K562 (cell line): ENCODE measurements at regions of chr6 and their contacts with region 1.

Region 1: DNA sequence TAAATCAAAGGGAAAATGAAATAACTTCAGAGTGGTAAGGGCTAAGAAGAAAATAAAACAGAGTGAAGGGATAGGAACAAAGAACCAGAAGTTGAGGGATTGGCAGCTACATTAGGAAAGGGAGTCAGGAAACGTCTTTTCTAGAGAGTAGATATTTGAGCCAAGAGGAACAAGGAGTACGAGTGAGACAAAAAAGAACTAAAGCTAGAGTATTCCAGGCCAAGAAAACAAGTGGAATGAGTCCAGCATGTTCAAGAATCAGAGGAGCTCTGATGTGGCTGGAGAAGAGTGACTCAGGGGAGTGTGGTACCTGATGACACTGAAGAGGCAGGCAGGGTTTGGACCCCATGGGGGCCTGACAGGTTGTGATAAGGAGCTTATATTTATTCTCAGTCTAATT is 66.3 kb downstream of the CEP162 start:
- DNase-seq: peak in 1 of 4 experiments; percentile 12
- ATAC-seq: no peak
- H3K4me3 ChIP-seq: no peak overlapping the region
- H3K27ac ChIP-seq: no peak overlapping the region
- H3K4me1 ChIP-seq: no peaks in the 10 kb centered on the region
- H3K27me3 ChIP-seq: no peaks in the 10 kb centered on the region
- CTCF ChIP-seq: no peak
- EP300 ChIP-seq: no peak
- POLR2A ChIP-seq: no peak
- RAD21 ChIP-seq: no peak

Region 2: GRCh38 chr6:83853178-83854000 is 307.8 kb before region 1 on chr6 and contains the start of gene RIPPLY2:
- CTCF ChIA-PET with region 1: no interaction called
- POLR2A ChIA-PET with region 1: no interaction called
- in situ Hi-C with region 1: no loop called
- intact Hi-C with region 1: no loop called
- DNase-seq: no peak
- ATAC-seq: no peak; the same call in 2 of the 3 replicates
- H3K4me3 ChIP-seq: no peak within 1 kb of the TSS
- H3K27ac ChIP-seq: no peak within 1 kb of the TSS
- H3K4me1 ChIP-seq: peaks cover 0 to 12% of the 10 kb centered on the region in 2 experiments; a peak in 1 of 5 replicates
- H3K27me3 ChIP-seq: peaks cover 16 to 25% of the 10 kb centered on the region in 2 experiments
- CTCF ChIP-seq: no peak
- EP300 ChIP-seq: no peak
- POLR2A ChIP-seq: no peak
- RAD21 ChIP-seq: no peak
- polyA plus RNA-seq, gene RIPPLY2: not detected

Region 3: GRCh38 chr6:83948851-83949250 is 212.3 kb before region 1 on chr6:
- CTCF ChIA-PET with region 1: no interaction called
- POLR2A ChIA-PET with region 1: no interaction called
- in situ Hi-C with region 1: no loop called
- intact Hi-C with region 1: no loop called
- DNase-seq: peak in 2 of 4 experiments; percentile 9 to 17
- ATAC-seq: peak; percentile 70
- H3K4me3 ChIP-seq: no peak overlapping the region
- H3K27ac ChIP-seq: no peak overlapping the region
- H3K4me1 ChIP-seq: peaks cover 0 to 3% of the 10 kb centered on the region in 2 experiments; a peak in 1 of 5 replicates
- H3K27me3 ChIP-seq: no peaks in the 10 kb centered on the region
- CTCF ChIP-seq: no peak
- EP300 ChIP-seq: no peak
- POLR2A ChIP-seq: no peak
- RAD21 ChIP-seq: no peak

Region 4: GRCh38 chr6:84119253-84119652 is 41.9 kb before region 1 on chr6:
- CTCF ChIA-PET with region 1: no interaction called
- POLR2A ChIA-PET with region 1: no interaction called
- in situ Hi-C with region 1: no loop called
- intact Hi-C with region 1: no loop called
- DNase-seq: peak in 1 of 4 experiments; percentile 24
- ATAC-seq: peak; percentile 69; the same call in 2 of the 3 replicates
- H3K4me3 ChIP-seq: no peak overlapping the region
- H3K27ac ChIP-seq: no peak overlapping the region
- H3K4me1 ChIP-seq: peaks cover 0 to 4% of the 10 kb centered on the region in 2 experiments; a peak in 2 of 5 replicates
- H3K27me3 ChIP-seq: no peaks in the 10 kb centered on the region
- CTCF ChIP-seq: no peak; a peak in 1 of 6 replicates
- EP300 ChIP-seq: no peak
- POLR2A ChIP-seq: no peak
- RAD21 ChIP-seq: no peak

Region 5: DNA sequence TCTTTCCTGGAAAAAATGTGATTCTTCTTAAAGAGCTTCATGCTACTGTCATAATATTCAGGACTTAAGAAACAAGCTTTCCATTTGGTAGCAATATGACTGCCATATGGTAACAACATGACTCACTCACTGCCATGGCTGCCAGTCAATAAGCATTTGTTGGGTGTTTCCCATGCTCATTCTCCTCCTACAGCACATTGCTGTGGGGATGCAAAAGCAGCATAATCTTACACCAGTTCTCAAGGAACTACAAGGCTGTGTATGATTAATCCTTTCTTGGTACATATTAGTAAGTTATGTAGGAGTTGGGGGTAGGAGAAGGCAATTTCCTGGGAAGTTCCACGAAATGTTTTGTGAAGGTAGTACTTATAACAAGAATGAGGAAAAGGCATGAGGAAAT is 10.5 kb before region 1 on chr6:
- CTCF ChIA-PET with region 1: no interaction called
- POLR2A ChIA-PET with region 1: interaction called, 10 read pairs
- in situ Hi-C with region 1: no loop called
- intact Hi-C with region 1: no loop called
- DNase-seq: no peak
- ATAC-seq: no peak
- H3K4me3 ChIP-seq: no peak overlapping the region
- H3K27ac ChIP-seq: no peak overlapping the region
- H3K4me1 ChIP-seq: no peaks in the 10 kb centered on the region; a peak in 1 of 5 replicates
- H3K27me3 ChIP-seq: no peaks in the 10 kb centered on the region
- CTCF ChIP-seq: no peak
- EP300 ChIP-seq: no peak
- POLR2A ChIP-seq: no peak
- RAD21 ChIP-seq: no peak

Region 6: DNA sequence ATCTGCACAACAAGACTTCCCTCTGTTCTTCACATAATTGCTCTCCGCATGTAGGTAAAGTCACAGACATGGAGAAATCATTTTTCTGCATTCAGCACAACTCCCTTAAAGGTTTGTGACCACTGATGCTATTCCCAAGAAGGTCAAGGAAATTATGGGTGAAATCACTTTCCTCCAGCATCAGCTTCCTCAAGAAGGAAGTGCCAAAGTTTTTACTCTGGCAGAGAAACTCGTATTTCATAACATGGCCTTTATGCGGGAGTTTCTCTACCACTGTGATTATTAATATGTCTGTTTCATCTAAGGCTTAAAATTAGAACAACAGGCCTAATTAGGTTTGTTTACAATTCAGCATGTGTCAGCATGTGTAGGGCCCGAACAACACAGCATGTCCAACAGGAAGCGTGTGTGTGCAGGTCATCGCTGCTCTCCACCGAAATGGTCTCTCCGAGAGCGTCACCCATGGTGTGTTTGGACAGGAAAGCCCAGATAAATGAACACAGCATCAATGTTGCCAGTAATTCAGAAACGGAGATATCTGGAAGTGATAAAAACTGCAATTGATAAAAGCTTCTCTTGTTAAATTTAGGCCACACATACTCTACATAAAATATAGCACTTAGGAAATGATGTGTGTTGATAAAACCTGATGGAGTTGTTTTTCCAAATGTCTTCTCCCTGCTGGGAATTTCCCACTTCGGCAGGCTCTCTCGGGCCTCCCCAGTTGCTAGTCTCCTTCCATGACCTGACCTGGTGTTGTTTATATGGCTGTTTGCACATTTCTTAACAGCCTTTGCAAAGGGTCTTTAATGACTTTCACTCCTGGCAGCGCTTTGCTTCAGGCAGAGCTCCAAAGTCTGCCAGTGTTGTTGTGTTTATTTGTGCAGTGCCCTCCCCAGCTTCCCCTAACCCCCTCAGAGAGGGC is 331.3 kb after region 1 on chr6:
- CTCF ChIA-PET with region 1: no interaction called
- POLR2A ChIA-PET with region 1: no interaction called
- in situ Hi-C with region 1: no loop called
- intact Hi-C with region 1: no loop called
- DNase-seq: no peak
- ATAC-seq: no peak
- H3K4me3 ChIP-seq: no peak overlapping the region
- H3K27ac ChIP-seq: no peak overlapping the region
- H3K4me1 ChIP-seq: no peaks in the 10 kb centered on the region
- H3K27me3 ChIP-seq: no peaks in the 10 kb centered on the region
- CTCF ChIP-seq: no peak
- EP300 ChIP-seq: no peak
- POLR2A ChIP-seq: no peak
- RAD21 ChIP-seq: no peak